Keratinocyte (primary cell): ENCODE measurements at regions of chr3 and their contacts with region 1.

Region 1: GRCh38 chr3:13518516-13518953 is 30.4 kb upstream of the FBLN2 start:
- DNase-seq: no peak
- H3K4me3 ChIP-seq: no peak overlapping the region
- H3K27ac ChIP-seq: no peak overlapping the region
- H3K4me1 ChIP-seq: peaks cover 20% of the 10 kb centered on the region
- H3K27me3 ChIP-seq: no peaks in the 10 kb centered on the region
- CTCF ChIP-seq: no peak

Region 2: GRCh38 chr3:13391308-13391707 is 127.2 kb before region 1 on chr3:
- dilution Hi-C with region 1: no loop called
- DNase-seq: no peak
- H3K4me3 ChIP-seq: no peak overlapping the region
- H3K27ac ChIP-seq: no peak overlapping the region
- H3K4me1 ChIP-seq: no peaks in the 10 kb centered on the region
- H3K27me3 ChIP-seq: peaks cover 8% of the 10 kb centered on the region
- CTCF ChIP-seq: peak in 2 of 3 experiments; percentile 18 to 27

Region 3: DNA sequence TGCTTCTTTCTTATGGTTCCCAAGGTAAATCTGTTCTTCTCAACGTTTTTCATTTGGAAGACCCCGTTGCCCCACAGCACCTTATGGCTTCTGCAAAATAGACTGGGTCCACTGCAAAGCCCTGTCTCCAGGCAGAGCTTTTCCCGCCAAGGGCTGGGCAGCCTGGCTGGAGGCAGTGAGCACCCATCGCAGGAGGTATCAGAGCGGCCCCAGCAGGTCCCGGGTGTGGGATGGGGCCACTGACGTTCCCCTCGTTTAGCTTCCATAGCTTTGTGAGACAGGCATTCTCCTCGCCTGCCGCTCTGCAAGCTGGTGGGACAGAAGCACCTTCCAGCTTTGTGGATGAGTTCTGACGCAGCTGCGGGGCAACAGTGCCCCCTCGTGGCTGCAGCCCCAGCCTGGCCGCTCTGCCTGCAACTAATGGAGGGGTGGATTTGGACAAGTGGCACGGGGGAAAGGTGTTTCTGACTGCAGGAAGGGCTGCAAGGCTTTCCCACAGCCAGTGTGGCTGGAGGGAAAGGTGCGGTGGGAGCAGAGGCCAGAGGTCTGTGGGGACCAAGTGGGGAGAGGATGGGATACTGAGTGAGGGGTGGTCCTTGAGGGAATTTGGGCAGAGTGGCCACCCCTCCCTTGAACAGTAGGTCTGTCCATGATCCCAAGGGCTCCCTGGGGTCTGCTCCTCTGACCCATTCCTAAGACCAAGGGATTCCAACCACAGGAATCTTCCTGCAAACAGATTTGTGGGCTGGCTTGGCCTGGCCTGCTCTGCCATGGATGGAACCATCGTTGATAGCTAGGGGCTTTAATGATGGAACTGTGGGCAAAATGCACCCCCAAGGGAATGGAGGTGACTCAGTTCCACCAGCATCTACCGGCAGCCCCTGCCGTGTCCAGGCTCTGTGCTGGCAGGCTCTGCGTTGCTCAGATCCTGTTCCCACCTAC is 129.8 kb after region 1 on chr3:
- dilution Hi-C with region 1: loop called (anchors 10 kb)
- DNase-seq: peak; percentile 69
- H3K4me3 ChIP-seq: peak overlapping the region in 2 of 3 experiments; percentile 41 to 45
- H3K27ac ChIP-seq: peak overlapping the region; percentile 55
- H3K4me1 ChIP-seq: peaks cover 35% of the 10 kb centered on the region
- H3K27me3 ChIP-seq: no peaks in the 10 kb centered on the region
- CTCF ChIP-seq: peak in 2 of 3 experiments; percentile 97 to 99